Activated CD8-positive, alpha-beta T cell treated with anti-CD3 and anti-CD28 coated beads, Interleukin-2, amount 10 ng/mL, durations not matched to agents 7 days and 5 days (primary cell): ENCODE measurements at regions of chr16 and their contacts with region 1.

Region 1: GRCh38 chr16:2682209-2683021 is at the start of gene KCTD5:
- DNase-seq: peak; percentile 99
- ATAC-seq: peak; percentile 94
- H3K4me3 Mint-ChIP-seq: peak within 1 kb of the TSS; percentile 94
- H3K27ac Mint-ChIP-seq: peak within 1 kb of the TSS; percentile 94
- H3K4me1 Mint-ChIP-seq: peaks cover 41% of the 10 kb centered on the region
- H3K27me3 Mint-ChIP-seq: no peaks in the 10 kb centered on the region
- total RNA-seq, gene KCTD5: 33.2 to 35.9 TPM

Region 2: DNA sequence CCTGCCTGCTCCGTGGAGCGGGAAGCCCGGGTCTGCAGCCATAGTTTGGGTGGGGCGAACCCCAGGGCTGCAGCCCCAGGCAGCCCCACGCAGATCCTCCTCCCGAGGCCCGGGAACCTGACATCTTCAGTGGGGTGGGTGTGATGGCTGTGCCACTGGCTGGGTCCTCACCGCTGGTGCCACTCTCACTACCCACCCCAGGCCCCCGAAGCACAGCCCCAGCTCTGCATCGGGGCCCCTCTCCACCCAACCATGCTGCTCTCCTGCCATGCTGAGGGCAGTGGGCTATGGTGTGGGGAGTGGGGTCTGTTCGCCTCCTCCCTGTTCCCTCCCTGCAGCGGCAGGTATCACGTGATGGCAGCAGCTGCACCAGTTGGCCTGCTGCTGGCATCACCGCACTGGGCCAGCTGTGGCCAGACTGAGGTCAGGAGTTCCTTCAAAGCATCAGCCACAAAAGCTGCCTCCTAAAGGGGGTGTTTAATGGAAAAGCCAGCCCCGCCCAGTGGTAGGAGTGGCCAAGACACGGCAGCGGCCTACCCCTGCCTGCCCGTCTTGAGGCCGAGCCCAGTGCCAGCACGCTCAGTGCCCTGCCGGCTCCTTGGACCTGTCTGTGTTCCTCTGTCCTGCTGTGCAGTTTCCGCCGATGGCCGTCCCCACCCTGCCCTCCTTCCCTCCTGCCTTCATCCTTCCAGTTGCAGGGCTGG is 10.7 kb after region 1 on chr16:
- CTCF ChIA-PET with region 1: no interaction called
- POLR2A ChIA-PET with region 1: interaction called, 10 read pairs
- DNase-seq: no peak
- ATAC-seq: no peak
- H3K4me3 Mint-ChIP-seq: no peak overlapping the region
- H3K27ac Mint-ChIP-seq: no peak overlapping the region
- H3K4me1 Mint-ChIP-seq: peaks cover 6% of the 10 kb centered on the region
- H3K27me3 Mint-ChIP-seq: no peaks in the 10 kb centered on the region

Region 3: DNA sequence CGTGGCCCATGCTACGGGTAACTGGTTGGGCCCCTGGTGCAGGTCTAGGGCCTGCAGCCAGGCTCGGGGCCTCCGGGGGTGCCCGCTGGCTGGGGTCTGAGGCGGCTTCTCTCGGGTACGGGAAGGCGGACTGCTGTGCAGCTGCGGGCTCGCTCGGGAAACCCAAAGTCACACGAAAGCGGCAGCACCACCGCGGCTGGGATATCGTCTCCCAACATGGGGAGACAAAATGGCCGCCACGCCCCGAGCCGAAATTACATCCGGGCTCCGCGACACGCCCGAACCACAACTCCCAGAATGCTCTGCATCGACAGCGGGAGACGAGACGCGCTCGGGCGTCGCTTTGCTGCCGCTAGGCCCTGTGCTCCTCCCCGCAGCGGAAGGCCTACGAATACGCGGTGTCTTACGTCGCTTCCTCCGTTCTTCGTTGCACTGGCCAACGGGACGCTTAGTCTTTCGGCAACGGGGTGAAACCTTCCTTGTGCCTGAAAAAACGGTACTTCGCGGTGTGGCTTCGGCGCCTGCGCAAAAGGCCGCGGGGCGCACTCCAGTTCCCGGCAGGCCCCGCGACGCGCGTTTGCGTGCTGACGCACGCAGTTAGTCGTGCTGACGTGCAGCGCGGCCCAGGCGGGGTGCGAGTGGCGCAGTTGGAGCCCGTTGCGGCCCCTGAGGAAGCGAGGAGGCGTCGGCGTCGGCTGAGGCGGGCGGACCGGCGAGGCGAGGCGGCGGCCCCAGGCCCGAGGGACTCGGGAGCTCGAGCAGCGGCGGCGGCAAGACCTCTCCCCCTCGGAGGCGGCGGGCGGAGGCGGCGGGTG is 69.8 kb after region 1 on chr16 and contains the start of gene SRRM2:
- CTCF ChIA-PET with region 1: no interaction called
- POLR2A ChIA-PET with region 1: interaction called, 10 read pairs
- DNase-seq: peak; percentile 97
- ATAC-seq: peak; percentile 91
- H3K4me3 Mint-ChIP-seq: peak within 1 kb of the TSS; percentile 95
- H3K27ac Mint-ChIP-seq: peak within 1 kb of the TSS; percentile 99
- H3K4me1 Mint-ChIP-seq: peaks cover 61% of the 10 kb centered on the region
- H3K27me3 Mint-ChIP-seq: no peaks in the 10 kb centered on the region
- total RNA-seq, gene SRRM2: 501 to 511 TPM

Region 4: GRCh38 chr16:2854700-2855309 is 172.4 kb after region 1 on chr16:
- CTCF ChIA-PET with region 1: no interaction called
- POLR2A ChIA-PET with region 1: no interaction called
- DNase-seq: no peak
- ATAC-seq: no peak
- H3K4me3 Mint-ChIP-seq: no peak overlapping the region
- H3K27ac Mint-ChIP-seq: no peak overlapping the region
- H3K4me1 Mint-ChIP-seq: peaks cover 9% of the 10 kb centered on the region
- H3K27me3 Mint-ChIP-seq: peaks cover 3% of the 10 kb centered on the region